ENCODE measurements at regions of chr6 and their contacts with region 1.

Region 1: GRCh38 chr6:161370880-161371279 is 97.0 kb upstream of the AGPAT4 start:
- DNase-seq: peak; percentile 66
- H3K4me3 ChIP-seq: no peak overlapping the region
- H3K27ac ChIP-seq: no peak overlapping the region
- H3K4me1 ChIP-seq: peaks cover 23% of the 10 kb centered on the region
- H3K27me3 ChIP-seq: no peaks in the 10 kb centered on the region
- CTCF ChIP-seq: peak; percentile 96 to 98

Region 2: DNA sequence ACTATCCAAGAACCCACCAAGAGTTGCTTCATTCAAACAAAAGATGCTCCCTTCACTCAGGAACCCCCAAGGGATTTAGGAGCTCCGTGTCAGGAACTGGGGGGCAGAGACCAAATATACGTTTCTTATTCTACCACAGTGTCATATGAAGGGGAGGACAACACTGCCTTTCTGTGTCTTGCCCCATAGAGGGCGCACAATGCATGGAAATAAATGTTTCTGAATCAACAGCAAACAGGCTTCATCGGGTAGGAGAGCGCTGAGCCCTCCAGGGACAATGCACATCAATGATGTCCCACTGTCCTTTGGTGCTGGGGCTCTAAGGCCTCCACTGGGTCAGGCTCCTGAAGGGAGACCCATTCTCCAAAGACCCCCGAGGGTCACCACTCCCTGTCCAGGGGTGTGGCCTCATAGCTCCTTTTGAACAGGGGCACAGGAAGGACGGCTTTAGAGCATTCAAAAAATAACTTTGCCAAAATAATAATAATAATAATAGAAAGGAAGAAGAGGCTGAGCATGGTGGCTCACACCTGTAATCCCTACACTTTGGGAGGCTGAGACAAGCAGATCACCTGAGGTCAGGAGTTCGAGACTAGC is 637.7 kb before region 1 on chr6:
- CTCF ChIA-PET with region 1: interaction called, 3 read pairs
- dilution Hi-C with region 1: no loop called
- in situ Hi-C with region 1: no loop called
- intact Hi-C with region 1: loop called (anchors 1 kb)
- DNase-seq: peak; percentile 35
- H3K4me3 ChIP-seq: no peak overlapping the region
- H3K27ac ChIP-seq: no peak overlapping the region
- H3K4me1 ChIP-seq: no peaks in the 10 kb centered on the region
- H3K27me3 ChIP-seq: no peaks in the 10 kb centered on the region
- CTCF ChIP-seq: peak; percentile 83 to 90

Region 3: GRCh38 chr6:160750276-160750689 is 620.6 kb before region 1 on chr6:
- CTCF ChIA-PET with region 1: no interaction called
- dilution Hi-C with region 1: loop called (anchors 25 kb)
- in situ Hi-C with region 1: loop called (anchors 10 kb)
- intact Hi-C with region 1: loop called (anchors 1 kb)
- DNase-seq: peak; percentile 25
- H3K4me3 ChIP-seq: no peak overlapping the region
- H3K27ac ChIP-seq: no peak overlapping the region
- H3K4me1 ChIP-seq: no peaks in the 10 kb centered on the region
- H3K27me3 ChIP-seq: no peaks in the 10 kb centered on the region
- CTCF ChIP-seq: peak; percentile 85 to 86

Region 4: GRCh38 chr6:160930547-160931377 is 440.1 kb before region 1 on chr6:
- CTCF ChIA-PET with region 1: interaction called, 17 read pairs
- dilution Hi-C with region 1: no loop called
- in situ Hi-C with region 1: loop called (anchors 5 to 10 kb)
- intact Hi-C with region 1: loop called (anchors 1 kb)
- DNase-seq: peak; percentile 61
- H3K4me3 ChIP-seq: peak overlapping the region; percentile 53 to 66 (median 54)
- H3K27ac ChIP-seq: no peak overlapping the region
- H3K4me1 ChIP-seq: peaks cover 4% of the 10 kb centered on the region
- H3K27me3 ChIP-seq: no peaks in the 10 kb centered on the region
- CTCF ChIP-seq: peak; percentile 76 to 92

Region 5: DNA sequence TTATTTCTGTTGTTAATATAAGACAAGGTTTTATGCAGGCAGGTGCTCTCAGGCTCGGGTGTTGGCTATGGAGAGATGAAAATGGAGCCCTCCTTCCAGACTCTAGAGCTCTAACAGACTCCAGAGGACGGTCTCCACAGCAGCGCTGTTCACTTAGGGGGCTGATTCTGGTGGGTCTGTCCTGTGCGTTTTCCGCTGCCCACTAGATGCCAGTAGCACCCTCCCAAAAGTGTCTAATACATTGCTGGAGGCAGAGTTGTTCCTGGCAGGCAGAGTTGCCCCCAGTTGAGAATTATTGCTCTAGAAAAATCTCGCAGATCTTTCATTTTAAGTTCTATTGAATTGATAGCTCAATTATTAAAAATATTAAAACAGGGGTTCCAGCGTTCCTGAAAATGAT is 269.4 kb before region 1 on chr6:
- CTCF ChIA-PET with region 1: interaction called, 4 read pairs
- dilution Hi-C with region 1: no loop called
- in situ Hi-C with region 1: no loop called
- intact Hi-C with region 1: loop called (anchors 2 kb)
- DNase-seq: no peak
- H3K4me3 ChIP-seq: no peak overlapping the region
- H3K27ac ChIP-seq: no peak overlapping the region
- H3K4me1 ChIP-seq: peaks cover 20% of the 10 kb centered on the region
- H3K27me3 ChIP-seq: no peaks in the 10 kb centered on the region
- CTCF ChIP-seq: no peak

Region 6: DNA sequence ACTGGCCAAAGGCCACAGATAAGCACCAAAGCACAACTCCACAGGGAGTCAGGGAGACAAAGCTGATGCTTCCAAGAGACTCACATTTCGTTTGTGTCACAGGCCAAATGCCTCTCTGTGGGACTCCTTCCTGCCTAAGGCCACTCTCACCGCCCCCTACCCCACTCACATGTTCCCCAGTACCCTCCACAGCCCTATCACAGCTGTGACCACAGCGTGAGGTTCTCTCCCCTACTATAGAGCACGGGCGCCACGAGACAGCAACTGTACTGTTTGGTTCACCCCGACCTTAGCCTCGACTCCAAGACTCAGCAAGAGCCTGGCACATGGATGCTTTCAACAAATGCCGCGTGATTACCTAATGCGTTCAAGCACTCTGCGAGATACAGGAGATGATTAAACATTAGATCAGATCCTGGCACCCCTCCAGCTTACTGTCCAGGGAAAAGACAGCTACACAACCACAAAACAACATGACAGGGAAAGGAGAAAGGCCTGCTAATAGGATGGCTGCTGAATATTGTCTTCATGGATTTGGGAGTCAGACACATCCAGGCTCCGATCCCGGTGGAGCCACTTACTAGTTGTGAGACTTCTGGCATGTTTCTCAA is 202.5 kb before region 1 on chr6:
- CTCF ChIA-PET with region 1: no interaction called
- dilution Hi-C with region 1: no loop called
- in situ Hi-C with region 1: loop called (anchors 10 to 25 kb)
- intact Hi-C with region 1: no loop called
- DNase-seq: peak; percentile 96
- H3K4me3 ChIP-seq: no peak overlapping the region
- H3K27ac ChIP-seq: no peak overlapping the region
- H3K4me1 ChIP-seq: peaks cover 14% of the 10 kb centered on the region
- H3K27me3 ChIP-seq: no peaks in the 10 kb centered on the region
- CTCF ChIP-seq: no peak

Measured in mammary epithelial cell (primary cell).